ENCODE measurements at regions of chr1 and their contacts with region 1.

Region 1: DNA sequence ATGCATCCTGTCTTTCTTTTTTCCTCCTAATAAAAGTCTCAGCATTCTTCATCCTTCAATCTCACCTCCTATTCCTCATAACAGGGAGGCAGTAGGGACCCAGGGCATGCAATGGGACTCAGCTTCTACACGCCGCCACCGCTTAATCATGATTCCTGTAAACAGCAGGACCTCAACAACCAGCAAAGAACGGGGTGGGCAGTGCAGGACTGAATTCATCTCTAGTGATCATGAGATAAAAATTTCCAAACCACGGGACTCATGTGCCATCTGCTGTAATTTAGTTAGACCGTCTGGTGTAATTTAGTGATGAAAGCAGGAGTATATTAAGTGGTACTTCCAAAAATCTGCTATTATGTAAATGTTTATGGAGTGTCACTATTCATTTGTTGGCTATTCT is 5.4 kb downstream of the PRAMEF12 start:
- DNase-seq: no peak
- ATAC-seq: no peak
- H3K4me3 ChIP-seq: no peak overlapping the region
- H3K27ac ChIP-seq: no peak overlapping the region
- H3K4me1 ChIP-seq: no peaks in the 10 kb centered on the region
- H3K27me3 ChIP-seq: no peaks in the 10 kb centered on the region
- CTCF ChIP-seq: no peak
- POLR2A ChIP-seq: no peak
- RAD21 ChIP-seq: no peak

Region 2: DNA sequence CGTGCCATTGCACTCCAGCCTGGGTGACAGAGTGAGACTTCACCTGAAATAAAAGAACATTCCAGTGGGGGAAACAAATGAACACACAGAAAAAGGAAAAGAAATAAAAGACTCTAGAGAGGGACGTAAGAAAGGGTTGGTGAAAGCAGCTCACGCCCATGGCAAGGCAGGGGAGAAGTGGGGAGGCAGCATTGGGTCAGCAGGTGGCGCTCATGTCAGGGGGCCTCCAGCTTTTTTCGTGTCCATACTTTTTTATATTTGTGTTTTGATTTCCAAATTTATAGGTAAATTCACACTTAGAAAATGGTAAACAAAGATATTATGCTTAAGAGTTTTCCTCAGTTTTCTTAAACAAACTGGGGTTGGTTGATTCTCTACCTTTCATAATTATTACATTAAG is 503.5 kb before region 1 on chr1:
- CTCF ChIA-PET with region 1: no interaction called
- POLR2A ChIA-PET with region 1: no interaction called
- RAD21 ChIA-PET with region 1: no interaction called
- intact Hi-C with region 1: loop called (anchors 10 kb)
- DNase-seq: no peak
- ATAC-seq: peak; percentile 70
- H3K4me3 ChIP-seq: no peak overlapping the region
- H3K27ac ChIP-seq: no peak overlapping the region
- H3K4me1 ChIP-seq: no peaks in the 10 kb centered on the region
- H3K27me3 ChIP-seq: no peaks in the 10 kb centered on the region
- CTCF ChIP-seq: peak; percentile 64 to 92 (median 80)
- POLR2A ChIP-seq: no peak
- RAD21 ChIP-seq: peak; percentile 66

Region 3: DNA sequence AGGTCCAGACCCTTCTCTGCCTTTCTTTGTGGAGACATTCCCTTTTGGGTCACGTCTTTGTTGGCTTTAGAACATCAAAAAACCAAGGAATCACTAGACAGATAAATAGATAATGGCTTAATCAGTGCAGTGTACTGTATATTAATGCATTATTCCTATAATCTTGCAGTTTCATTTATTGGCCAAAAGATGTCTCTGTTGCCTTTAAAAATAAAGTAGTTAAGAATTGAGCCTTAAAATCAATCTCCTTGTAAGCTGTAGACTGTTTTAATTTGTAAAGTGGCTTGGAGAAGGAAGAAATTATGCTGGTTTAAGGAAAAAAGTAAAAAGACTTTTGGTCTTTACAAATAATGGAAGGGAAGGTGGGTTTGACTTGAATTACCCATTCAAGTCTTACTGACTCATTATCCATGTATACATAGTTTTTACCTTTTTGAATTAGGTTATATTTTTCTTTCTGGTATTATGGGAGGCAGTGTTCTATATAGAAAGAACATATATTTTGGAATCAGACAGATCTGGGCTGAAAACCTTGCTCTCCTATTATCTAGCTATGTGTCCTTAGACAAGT is 464.5 kb before region 1 on chr1:
- CTCF ChIA-PET with region 1: no interaction called
- POLR2A ChIA-PET with region 1: no interaction called
- RAD21 ChIA-PET with region 1: no interaction called
- intact Hi-C with region 1: loop called (anchors 5 kb)
- DNase-seq: no peak
- ATAC-seq: peak; percentile 80
- H3K4me3 ChIP-seq: no peak overlapping the region
- H3K27ac ChIP-seq: no peak overlapping the region
- H3K4me1 ChIP-seq: no peaks in the 10 kb centered on the region
- H3K27me3 ChIP-seq: no peaks in the 10 kb centered on the region
- CTCF ChIP-seq: peak; percentile 25 to 81 (median 71); a peak in 3 of 6 replicates
- POLR2A ChIP-seq: no peak
- RAD21 ChIP-seq: peak; percentile 84

Measured in HCT116 (cell line).